ENCODE measurements at regions of chr9 and their contacts with region 1.

Region 1: DNA sequence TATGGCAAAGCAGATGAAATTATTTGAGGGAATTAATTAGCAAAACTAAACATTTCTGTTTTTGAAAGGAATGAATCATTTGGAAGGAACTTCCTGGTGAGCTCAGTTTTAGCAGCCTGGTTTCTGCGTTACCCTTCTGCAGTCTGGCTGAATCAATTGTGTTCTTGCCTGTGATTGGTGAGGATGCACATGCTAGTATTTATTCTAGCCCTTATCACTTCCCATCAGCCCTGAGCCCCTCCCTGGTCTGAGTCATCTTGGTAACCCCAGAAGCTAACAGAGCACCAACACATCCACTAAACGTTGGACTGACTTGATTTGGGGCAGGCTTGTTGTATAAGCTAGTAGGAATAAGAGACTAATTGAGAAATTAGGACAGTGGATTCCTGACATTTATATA is 6.6 kb downstream of the TJP2 start:
- DNase-seq: peak in 6 of 9 experiments; percentile 13 to 53 (median 26)
- ATAC-seq: peak; percentile 62
- H3K4me3 ChIP-seq: no peak overlapping the region
- H3K4me3 Mint-ChIP-seq: no peak overlapping the region
- H3K27ac ChIP-seq: no peak overlapping the region
- H3K27ac Mint-ChIP-seq: no peak overlapping the region
- H3K4me1 ChIP-seq: no peaks in the 10 kb centered on the region
- H3K4me1 Mint-ChIP-seq: no peaks in the 10 kb centered on the region
- H3K27me3 ChIP-seq: no peaks in the 10 kb centered on the region
- H3K27me3 Mint-ChIP-seq: peaks cover 4% of the 10 kb centered on the region
- CTCF ChIP-seq: no peak

Region 2: DNA sequence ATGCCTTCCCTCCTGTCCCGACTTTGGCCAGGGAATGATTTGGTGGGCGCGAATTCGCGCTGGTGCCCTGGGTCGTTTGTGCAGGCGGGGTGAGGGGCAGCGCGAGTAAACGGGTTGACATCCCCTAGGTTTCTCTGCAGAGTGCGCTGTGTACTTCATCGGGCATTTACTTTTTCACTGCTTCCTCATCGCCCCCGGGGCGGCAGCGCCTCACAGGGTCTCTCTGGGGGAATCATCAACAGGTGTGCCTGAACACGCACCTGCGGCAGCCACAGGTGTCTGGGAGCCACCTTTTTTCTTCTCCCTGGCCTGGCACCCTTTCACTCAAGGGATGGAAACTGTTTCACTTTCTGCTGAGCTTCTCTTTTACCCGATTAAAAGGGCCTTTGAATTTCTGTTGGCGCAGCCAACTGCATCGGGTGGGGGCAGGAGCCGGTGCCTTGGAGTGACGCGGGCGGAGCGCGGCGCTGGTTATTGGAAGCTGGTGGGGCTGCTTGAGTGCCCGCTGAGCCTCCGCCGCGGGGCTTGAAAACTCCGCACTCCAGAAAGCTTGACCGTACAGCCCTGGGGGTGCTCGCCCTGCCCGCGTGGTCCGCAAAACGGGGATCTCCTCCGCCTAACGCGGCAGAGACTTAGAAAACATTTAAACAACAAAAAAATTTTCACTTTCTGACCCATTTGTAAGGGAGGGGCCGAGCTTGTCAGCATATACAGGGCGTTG is 58.7 kb before region 1 on chr9:
- CTCF ChIA-PET with region 1: no interaction called
- POLR2A ChIA-PET with region 1: no interaction called
- intact Hi-C with region 1: loop called in 1 of 2 experiments (anchors 10 kb)
- DNase-seq: peak; percentile 4 to 51 (median 32)
- ATAC-seq: peak; percentile 68
- H3K4me3 ChIP-seq: peak overlapping the region; percentile 60 to 67
- H3K4me3 Mint-ChIP-seq: peak overlapping the region; percentile 93
- H3K27ac ChIP-seq: no peak overlapping the region
- H3K27ac Mint-ChIP-seq: peak overlapping the region; percentile 49
- H3K4me1 ChIP-seq: peaks cover 8% of the 10 kb centered on the region
- H3K4me1 Mint-ChIP-seq: peaks cover 12% of the 10 kb centered on the region
- H3K27me3 ChIP-seq: no peaks in the 10 kb centered on the region
- H3K27me3 Mint-ChIP-seq: peaks cover 6% of the 10 kb centered on the region
- CTCF ChIP-seq: no peak

Region 3: DNA sequence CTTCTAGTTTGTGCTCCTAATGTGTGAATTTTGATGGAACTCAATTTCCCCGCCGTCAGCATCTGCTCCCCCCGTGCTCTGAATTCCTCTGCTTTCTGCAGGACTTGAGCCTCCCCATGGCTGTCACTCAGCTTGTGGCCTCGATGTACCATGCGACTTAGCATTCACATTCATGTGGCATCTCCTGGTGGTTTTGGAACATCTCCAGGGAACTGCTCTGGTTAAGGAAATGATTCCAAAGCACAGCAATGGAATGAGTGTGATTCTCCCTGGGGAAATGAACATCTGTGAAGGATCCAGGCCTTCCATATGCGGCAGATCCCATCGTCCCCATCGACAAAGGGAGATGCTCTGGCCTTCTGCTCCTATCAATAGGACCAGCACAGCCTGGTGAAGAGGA is 263.4 kb after region 1 on chr9:
- CTCF ChIA-PET with region 1: no interaction called
- POLR2A ChIA-PET with region 1: no interaction called
- intact Hi-C with region 1: no loop called
- DNase-seq: no peak
- ATAC-seq: no peak
- H3K4me3 ChIP-seq: no peak overlapping the region
- H3K4me3 Mint-ChIP-seq: no peak overlapping the region
- H3K27ac ChIP-seq: no peak overlapping the region
- H3K27ac Mint-ChIP-seq: no peak overlapping the region
- H3K4me1 ChIP-seq: no peaks in the 10 kb centered on the region
- H3K4me1 Mint-ChIP-seq: no peaks in the 10 kb centered on the region
- H3K27me3 ChIP-seq: no peaks in the 10 kb centered on the region
- H3K27me3 Mint-ChIP-seq: peaks cover 23% of the 10 kb centered on the region
- CTCF ChIP-seq: no peak

Measured in CD8-positive, alpha-beta T cell (primary cell).